CD4-positive, alpha-beta T cell (primary cell): ENCODE measurements at regions of chr20 and their contacts with region 1.

Region 1: GRCh38 chr20:645318-646106 is 7.5 kb downstream of the SRXN1 start:
- DNase-seq: peak; percentile 28 to 80 (median 52)
- ATAC-seq: peak; percentile 69
- H3K4me3 ChIP-seq: no peak overlapping the region
- H3K4me3 Mint-ChIP-seq: no peak overlapping the region
- H3K27ac ChIP-seq: no peak overlapping the region
- H3K27ac Mint-ChIP-seq: no peak overlapping the region
- H3K4me1 ChIP-seq: peaks cover 17% of the 10 kb centered on the region
- H3K4me1 Mint-ChIP-seq: peaks cover 22% of the 10 kb centered on the region
- H3K27me3 ChIP-seq: peaks cover 12 to 14% of the 10 kb centered on the region in 2 experiments
- H3K27me3 Mint-ChIP-seq: peaks cover 21% of the 10 kb centered on the region
- CTCF ChIP-seq: peak; percentile 95

Region 2: GRCh38 chr20:549722-550496 is 95.6 kb before region 1 on chr20:
- CTCF ChIA-PET with region 1: no interaction called
- POLR2A ChIA-PET with region 1: no interaction called
- intact Hi-C with region 1: loop called in 1 of 2 experiments (anchors 5 kb)
- DNase-seq: no peak
- ATAC-seq: no peak
- H3K4me3 ChIP-seq: no peak overlapping the region
- H3K4me3 Mint-ChIP-seq: no peak overlapping the region
- H3K27ac ChIP-seq: no peak overlapping the region
- H3K27ac Mint-ChIP-seq: no peak overlapping the region
- H3K4me1 ChIP-seq: no peaks in the 10 kb centered on the region
- H3K4me1 Mint-ChIP-seq: no peaks in the 10 kb centered on the region
- H3K27me3 ChIP-seq: peaks cover 4 to 10% of the 10 kb centered on the region in 2 experiments
- H3K27me3 Mint-ChIP-seq: peaks cover 53% of the 10 kb centered on the region
- CTCF ChIP-seq: no peak